ENCODE measurements at regions of chr10 and their contacts with region 1.

Region 1: GRCh38 chr10:90871766-90872647 is at the start of gene RPP30:
- DNase-seq: peak; percentile 73
- ATAC-seq: peak; percentile 100
- H3K4me3 ChIP-seq: peak within 1 kb of the TSS; percentile 90 to 99
- H3K27ac ChIP-seq: peak within 1 kb of the TSS; percentile 93
- H3K4me1 ChIP-seq: peaks cover 10% of the 10 kb centered on the region; the same call in 1 of the 2 replicates
- H3K27me3 ChIP-seq: peaks cover 2% of the 10 kb centered on the region; the same call in 1 of the 2 replicates
- CTCF ChIP-seq: no peak
- total RNA-seq, gene RPP30: 59.0 TPM

Region 2: GRCh38 chr10:90751107-90751997 is 120.7 kb before region 1 on chr10:
- CTCF ChIA-PET with region 1: interaction called, 4 read pairs
- POLR2A ChIA-PET with region 1: no interaction called
- in situ Hi-C with region 1: no loop called
- intact Hi-C with region 1: loop called (anchors 2 kb)
- DNase-seq: peak; percentile 38
- ATAC-seq: peak; percentile 95
- H3K4me3 ChIP-seq: no peak overlapping the region
- H3K27ac ChIP-seq: no peak overlapping the region
- H3K4me1 ChIP-seq: no peaks in the 10 kb centered on the region
- H3K27me3 ChIP-seq: peaks cover 2% of the 10 kb centered on the region
- CTCF ChIP-seq: peak; percentile 85

Measured in Panc1 (cell line).